Gastrocnemius medialis (tissue), 4 donors: ENCODE measurements at regions of chr5 and their contacts with region 1.

Region 1: GRCh38 chr5:43066799-43067741 is 27.0 kb upstream of the ANXA2R start:
- DNase-seq: peak; percentile 88 to 89
- ATAC-seq: peak; percentile 73 to 77
- H3K4me3 ChIP-seq: peak overlapping the region; percentile 84 to 93 (median 87)
- H3K27ac ChIP-seq: peak overlapping the region; percentile 91 to 98 (median 94)
- H3K4me1 ChIP-seq: peaks cover 31 to 33% of the 10 kb centered on the region in 2 donors
- H3K27me3 ChIP-seq: no peaks in the 10 kb centered on the region
- CTCF ChIP-seq: no peak
- POLR2A ChIP-seq: peak; percentile 67 to 69

Region 2: GRCh38 chr5:42889311-42889933 is 177.6 kb before region 1 on chr5:
- in situ Hi-C with region 1: no loop called
- intact Hi-C with region 1: no loop called
- DNase-seq: peak; percentile 57 to 69
- ATAC-seq: peak; percentile 95 to 98
- H3K4me3 ChIP-seq: no peak overlapping the region
- H3K27ac ChIP-seq: no peak overlapping the region
- H3K4me1 ChIP-seq: no peaks in the 10 kb centered on the region
- H3K27me3 ChIP-seq: no peaks in the 10 kb centered on the region
- CTCF ChIP-seq: peak; percentile 70 to 96 (median 84)
- POLR2A ChIP-seq: no peak

Region 3: DNA sequence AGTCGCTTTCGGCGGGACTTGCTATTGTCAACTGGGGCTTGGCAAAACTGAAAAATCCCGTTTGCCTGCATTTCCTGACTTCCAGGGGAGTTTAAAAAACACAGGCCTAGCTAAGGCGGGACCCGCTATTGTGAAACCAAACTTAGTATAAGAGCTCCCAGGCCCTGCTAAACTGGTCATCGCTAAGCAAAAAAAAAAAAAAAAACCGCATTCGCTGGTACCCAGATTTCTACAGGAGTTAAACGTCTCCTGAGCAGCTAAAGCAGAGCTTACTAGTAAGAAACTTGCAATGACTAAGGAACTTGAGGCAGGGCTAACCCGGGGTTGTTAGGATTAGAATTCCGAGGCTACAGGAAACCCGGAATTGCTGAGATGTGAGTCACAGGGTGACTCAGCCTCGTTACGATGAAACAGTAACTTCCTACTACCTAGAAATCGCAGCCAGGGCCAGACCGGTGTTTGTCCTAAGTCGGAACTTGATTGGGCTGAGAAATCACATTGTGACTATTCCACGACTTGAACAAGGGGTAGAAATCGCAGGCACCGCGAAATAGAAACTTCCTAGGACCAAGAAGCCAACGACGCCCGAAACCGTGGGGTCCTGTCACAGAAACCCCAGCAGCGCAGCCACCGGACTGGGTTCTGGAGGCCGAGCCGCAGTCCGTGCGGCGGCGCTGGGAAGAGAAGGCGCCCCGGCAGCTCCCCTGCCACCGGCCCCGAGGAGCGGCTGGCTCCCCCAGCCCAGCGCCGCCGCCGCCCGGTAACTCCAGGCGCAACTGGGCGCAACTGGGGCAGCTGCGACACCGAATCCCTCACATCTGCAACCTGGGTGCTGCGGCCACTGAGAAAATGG is 116.4 kb before region 1 on chr5:
- in situ Hi-C with region 1: no loop called
- intact Hi-C with region 1: loop called (anchors 2 kb)
- DNase-seq: peak; percentile 46 to 58
- ATAC-seq: peak; percentile 80 to 90
- H3K4me3 ChIP-seq: peak overlapping the region; percentile 60 to 74 (median 65)
- H3K27ac ChIP-seq: peak overlapping the region; percentile 80 to 84 (median 83)
- H3K4me1 ChIP-seq: peaks cover 22 to 33% of the 10 kb centered on the region in 2 donors
- H3K27me3 ChIP-seq: peaks cover 69 to 81% (median 69%) of the 10 kb centered on the region in 3 donors
- CTCF ChIP-seq: no peak
- POLR2A ChIP-seq: peak in 1 of 2 donors; percentile 44

Region 4: GRCh38 chr5:43008369-43009153 is 58.5 kb before region 1 on chr5:
- in situ Hi-C with region 1: loop called in 2 of 4 experiments (anchors 5 kb)
- intact Hi-C with region 1: loop called (anchors 1 kb)
- DNase-seq: peak; percentile 72 to 85
- ATAC-seq: peak; percentile 79 to 81
- H3K4me3 ChIP-seq: peak overlapping the region; percentile 49 to 70 (median 68)
- H3K27ac ChIP-seq: peak overlapping the region; percentile 71 to 91 (median 87)
- H3K4me1 ChIP-seq: peaks cover 0 to 8% of the 10 kb centered on the region in 2 donors
- H3K27me3 ChIP-seq: peaks cover 0 to 33% (median 6%) of the 10 kb centered on the region in 3 donors
- CTCF ChIP-seq: peak in 1 of 5 experiments; percentile 8
- POLR2A ChIP-seq: peak; percentile 64 to 74

Region 5: GRCh38 chr5:43040287-43041098 is 26.6 kb before region 1 on chr5 and contains the start of gene ANXA2R:
- in situ Hi-C with region 1: no loop called
- intact Hi-C with region 1: loop called (anchors 1 kb)
- DNase-seq: peak; percentile 85 to 93
- ATAC-seq: peak; percentile 49 to 62
- H3K4me3 ChIP-seq: peak within 1 kb of the TSS; percentile 69 to 93 (median 82)
- H3K27ac ChIP-seq: peak within 1 kb of the TSS; percentile 96 to 99 (median 97)
- H3K4me1 ChIP-seq: peaks cover 10 to 15% of the 10 kb centered on the region in 2 donors
- H3K27me3 ChIP-seq: no peaks in the 10 kb centered on the region
- CTCF ChIP-seq: peak; percentile 87 to 92 (median 91)
- POLR2A ChIP-seq: peak in 1 of 2 donors; percentile 4
- total RNA-seq, gene ANXA2R: 1.1 to 3.3 (median 1.4) TPM

Region 6: DNA sequence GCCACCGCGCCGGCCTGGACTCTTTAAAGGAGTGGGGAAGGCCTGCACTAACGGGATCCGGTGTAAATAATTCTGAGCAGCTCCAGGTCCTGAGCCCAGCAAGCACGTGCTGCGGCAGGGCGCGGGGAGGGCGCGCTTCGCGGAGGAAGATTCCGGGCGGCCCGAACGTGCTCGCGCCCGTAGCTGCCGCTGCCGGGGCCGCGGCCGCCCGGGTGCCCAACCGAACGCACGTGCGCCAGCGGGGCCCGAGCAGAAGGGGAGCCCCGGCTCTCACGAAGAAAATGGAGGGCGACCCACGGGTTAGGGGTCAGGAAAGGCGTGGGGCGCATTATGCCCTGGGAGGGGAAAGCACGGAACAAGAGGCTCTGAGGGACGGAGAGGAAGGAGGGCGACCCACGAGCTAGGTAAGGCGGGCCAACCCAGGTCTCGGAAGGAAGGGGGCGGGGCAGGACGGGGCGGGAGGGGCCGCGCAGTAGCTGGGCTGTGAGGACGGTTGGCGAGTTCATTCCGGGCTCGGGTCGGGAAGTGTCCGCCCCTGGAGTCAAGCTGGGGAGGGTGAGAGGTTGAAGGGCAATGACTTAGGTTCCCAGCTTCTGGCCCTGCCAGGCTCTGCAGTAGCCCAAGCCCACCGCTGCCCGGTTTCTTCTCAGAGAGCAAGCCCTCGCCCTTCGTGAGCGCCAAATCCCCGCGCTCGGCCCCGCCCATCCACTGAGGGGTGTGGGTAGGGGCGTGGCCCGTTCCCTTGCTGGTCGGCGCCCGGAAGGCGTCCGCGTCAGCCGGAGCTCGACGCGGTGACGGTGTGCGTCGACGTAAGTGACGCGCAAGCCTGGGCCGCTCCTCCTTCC is 53.9 kb after region 1 on chr5 and contains the start of gene ZNF131:
- in situ Hi-C with region 1: no loop called
- intact Hi-C with region 1: loop called (anchors 1 kb)
- DNase-seq: peak; percentile 93 to 94
- ATAC-seq: peak; percentile 83 to 86
- H3K4me3 ChIP-seq: peak within 1 kb of the TSS; percentile 86 to 94 (median 92)
- H3K27ac ChIP-seq: peak within 1 kb of the TSS; percentile 94 to 98 (median 96)
- H3K4me1 ChIP-seq: peaks cover 35 to 50% of the 10 kb centered on the region in 2 donors
- H3K27me3 ChIP-seq: no peaks in the 10 kb centered on the region
- CTCF ChIP-seq: peak in 1 of 5 experiments; percentile 19
- POLR2A ChIP-seq: peak in 1 of 2 donors; percentile 86
- total RNA-seq, gene ZNF131: 16.4 to 44.6 (median 18.7) TPM

Region 7: GRCh38 chr5:43156388-43156787 is 89.3 kb after region 1 on chr5:
- in situ Hi-C with region 1: no loop called
- intact Hi-C with region 1: no loop called
- DNase-seq: no peak
- ATAC-seq: no peak
- H3K4me3 ChIP-seq: no peak overlapping the region
- H3K27ac ChIP-seq: no peak overlapping the region
- H3K4me1 ChIP-seq: peaks cover 19 to 21% of the 10 kb centered on the region in 2 donors
- H3K27me3 ChIP-seq: no peaks in the 10 kb centered on the region
- CTCF ChIP-seq: no peak
- POLR2A ChIP-seq: no peak

Region 8: GRCh38 chr5:43602461-43603343 is 535.6 kb after region 1 on chr5 and contains the start of gene NNT:
- in situ Hi-C with region 1: no loop called
- intact Hi-C with region 1: loop called (anchors 5 kb)
- DNase-seq: peak; percentile 75 to 78
- ATAC-seq: peak; percentile 45 to 46
- H3K4me3 ChIP-seq: peak within 1 kb of the TSS; percentile 75 to 85 (median 82)
- H3K27ac ChIP-seq: peak within 1 kb of the TSS; percentile 92 to 98 (median 97)
- H3K4me1 ChIP-seq: peaks cover 46 to 64% of the 10 kb centered on the region in 2 donors
- H3K27me3 ChIP-seq: no peaks in the 10 kb centered on the region
- CTCF ChIP-seq: peak in 1 of 5 experiments; percentile 8
- POLR2A ChIP-seq: peak; percentile 62 to 66
- total RNA-seq, gene NNT: 90.3 to 149 (median 127) TPM